Activated CD8-positive, alpha-beta T cell treated with anti-CD3 and anti-CD28 coated beads, Interleukin-2, amount 10 ng/mL, durations not matched to agents 7 days and 5 days (primary cell): ENCODE measurements at regions of chr11 and their contacts with region 1.

Region 1: DNA sequence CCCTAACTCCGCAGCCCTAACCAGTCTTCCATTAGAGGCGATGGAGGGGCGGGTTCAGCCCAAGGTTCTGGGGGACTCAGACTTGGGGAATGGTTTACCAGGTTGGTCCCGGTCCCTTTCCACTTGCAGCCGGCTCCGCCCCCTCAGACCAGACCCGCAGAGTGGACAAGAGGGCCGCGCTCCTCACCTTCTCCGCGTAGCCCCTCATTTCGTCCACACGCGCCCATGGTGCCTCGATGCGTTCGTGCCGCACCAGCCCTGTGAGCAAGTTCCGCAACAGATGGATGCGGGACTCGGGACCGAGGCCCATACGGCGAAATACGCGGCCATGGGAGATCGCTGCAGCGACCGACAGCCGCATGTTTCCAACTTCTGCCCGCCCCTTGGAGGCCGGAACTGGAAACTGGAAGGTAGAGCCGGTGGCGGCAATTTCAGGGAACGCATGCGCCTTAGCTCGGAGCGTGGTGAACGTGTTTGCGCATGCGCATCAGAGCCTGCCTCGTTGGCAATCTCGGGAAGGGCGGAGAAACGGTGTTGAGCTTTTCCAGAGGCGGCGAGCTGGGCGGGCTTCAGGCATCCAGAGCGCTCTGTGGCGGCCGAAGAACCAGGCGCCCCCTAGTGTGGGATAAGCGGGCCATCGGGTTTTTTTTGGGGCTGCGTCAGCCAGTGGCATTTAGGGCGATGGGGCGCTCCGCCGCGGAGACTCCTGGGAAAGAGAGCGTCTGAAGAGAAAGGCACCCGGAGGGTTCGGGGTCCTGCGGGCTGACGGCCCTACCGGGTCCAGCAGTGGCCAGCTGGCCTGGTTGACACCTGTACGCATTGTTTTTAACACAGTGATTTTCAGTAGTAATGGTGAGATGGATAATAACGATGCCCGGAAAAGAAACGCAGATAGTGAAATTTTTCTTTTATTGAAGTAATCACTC is at the start of gene MRPL17:
- DNase-seq: peak; percentile 100
- ATAC-seq: peak; percentile 98
- H3K4me3 Mint-ChIP-seq: peak within 1 kb of the TSS; percentile 99
- H3K27ac Mint-ChIP-seq: peak within 1 kb of the TSS; percentile 97
- H3K4me1 Mint-ChIP-seq: peaks cover 28% of the 10 kb centered on the region
- H3K27me3 Mint-ChIP-seq: no peaks in the 10 kb centered on the region
- total RNA-seq, gene MRPL17: 60.6 to 69.2 TPM

Region 2: GRCh38 chr11:6523253-6523652 is 159.9 kb before region 1 on chr11:
- CTCF ChIA-PET with region 1: interaction called, 17 read pairs
- POLR2A ChIA-PET with region 1: no interaction called
- DNase-seq: no peak
- ATAC-seq: no peak
- H3K4me3 Mint-ChIP-seq: no peak overlapping the region
- H3K27ac Mint-ChIP-seq: no peak overlapping the region
- H3K4me1 Mint-ChIP-seq: peaks cover 39% of the 10 kb centered on the region
- H3K27me3 Mint-ChIP-seq: no peaks in the 10 kb centered on the region

Region 3: DNA sequence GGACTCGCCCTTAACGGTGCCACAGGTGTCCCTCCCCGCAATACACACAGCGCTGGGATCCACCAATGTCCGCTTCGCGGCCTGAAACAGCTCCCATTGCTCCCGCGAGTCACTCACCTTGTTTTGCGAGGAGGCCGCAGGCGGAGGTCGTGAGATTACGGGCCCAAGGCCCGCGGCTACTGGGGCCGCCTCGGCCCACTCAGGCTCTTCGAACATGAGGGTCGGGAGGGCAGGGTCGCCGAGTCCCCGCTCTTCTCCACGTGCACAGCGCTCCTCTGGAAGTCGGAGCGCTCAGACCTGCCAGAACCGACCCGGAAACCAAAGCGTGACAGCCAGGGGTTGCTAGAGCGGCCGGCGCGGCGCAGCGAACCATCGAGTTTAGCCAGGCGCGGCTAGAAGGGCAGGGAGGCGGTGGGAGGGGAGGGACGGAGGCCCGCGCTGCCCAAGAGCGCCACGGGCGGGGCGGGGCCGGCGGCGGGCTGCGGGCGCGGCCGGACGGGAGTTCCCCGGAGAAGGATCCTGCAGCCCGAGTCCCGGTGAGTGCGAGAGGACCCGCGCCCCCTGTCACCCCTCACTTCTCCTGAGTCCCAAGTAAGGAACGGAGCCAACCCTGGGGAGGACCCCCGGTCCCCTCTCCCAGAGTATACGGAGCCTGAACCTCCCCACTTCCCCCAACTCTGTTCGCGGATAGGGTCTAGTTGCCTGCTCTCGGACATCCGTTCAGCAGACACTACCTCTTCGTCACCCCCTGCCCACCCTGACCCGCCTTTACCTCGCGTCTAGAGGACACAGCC is 79.7 kb before region 1 on chr11 and contains the starts of genes ILK and RRP8:
- CTCF ChIA-PET with region 1: interaction called, 67 read pairs
- POLR2A ChIA-PET with region 1: interaction called, 8 read pairs
- DNase-seq: peak; percentile 92
- ATAC-seq: peak; percentile 82
- H3K4me3 Mint-ChIP-seq: no peak within 1 kb of the TSS
- H3K27ac Mint-ChIP-seq: no peak within 1 kb of the TSS
- H3K4me1 Mint-ChIP-seq: peaks cover 35% of the 10 kb centered on the region
- H3K27me3 Mint-ChIP-seq: no peaks in the 10 kb centered on the region
- total RNA-seq, gene ILK: 195 to 197 TPM
- total RNA-seq, gene RRP8: 28.6 to 29.8 TPM

Region 4: GRCh38 chr11:6619004-6619745 is 64.0 kb before region 1 on chr11 and contains the start of gene TPP1:
- CTCF ChIA-PET with region 1: interaction called, 93 read pairs
- POLR2A ChIA-PET with region 1: interaction called, 27 read pairs
- DNase-seq: peak; percentile 95
- ATAC-seq: peak; percentile 96
- H3K4me3 Mint-ChIP-seq: no peak within 1 kb of the TSS
- H3K27ac Mint-ChIP-seq: no peak within 1 kb of the TSS
- H3K4me1 Mint-ChIP-seq: peaks cover 2% of the 10 kb centered on the region
- H3K27me3 Mint-ChIP-seq: no peaks in the 10 kb centered on the region
- total RNA-seq, gene TPP1: 74.1 to 78.9 TPM

Region 5: GRCh38 chr11:6646918-6647679 is 36.1 kb before region 1 on chr11:
- CTCF ChIA-PET with region 1: interaction called, 15 read pairs
- POLR2A ChIA-PET with region 1: no interaction called
- DNase-seq: peak; percentile 42
- ATAC-seq: peak; percentile 75
- H3K4me3 Mint-ChIP-seq: no peak overlapping the region
- H3K27ac Mint-ChIP-seq: no peak overlapping the region
- H3K4me1 Mint-ChIP-seq: no peaks in the 10 kb centered on the region
- H3K27me3 Mint-ChIP-seq: no peaks in the 10 kb centered on the region

Region 6: GRCh38 chr11:6695377-6695776 is 12.2 kb after region 1 on chr11:
- CTCF ChIA-PET with region 1: interaction called, 13 read pairs
- POLR2A ChIA-PET with region 1: no interaction called
- DNase-seq: no peak
- ATAC-seq: peak; percentile 45
- H3K4me3 Mint-ChIP-seq: no peak overlapping the region
- H3K27ac Mint-ChIP-seq: no peak overlapping the region
- H3K4me1 Mint-ChIP-seq: peaks cover 23% of the 10 kb centered on the region
- H3K27me3 Mint-ChIP-seq: no peaks in the 10 kb centered on the region

Region 7: GRCh38 chr11:6757373-6757967 is 74.3 kb after region 1 on chr11:
- CTCF ChIA-PET with region 1: interaction called, 12 read pairs
- POLR2A ChIA-PET with region 1: no interaction called
- DNase-seq: peak; percentile 76
- ATAC-seq: peak; percentile 90
- H3K4me3 Mint-ChIP-seq: no peak overlapping the region
- H3K27ac Mint-ChIP-seq: no peak overlapping the region
- H3K4me1 Mint-ChIP-seq: no peaks in the 10 kb centered on the region
- H3K27me3 Mint-ChIP-seq: peaks cover 2% of the 10 kb centered on the region

Region 8: DNA sequence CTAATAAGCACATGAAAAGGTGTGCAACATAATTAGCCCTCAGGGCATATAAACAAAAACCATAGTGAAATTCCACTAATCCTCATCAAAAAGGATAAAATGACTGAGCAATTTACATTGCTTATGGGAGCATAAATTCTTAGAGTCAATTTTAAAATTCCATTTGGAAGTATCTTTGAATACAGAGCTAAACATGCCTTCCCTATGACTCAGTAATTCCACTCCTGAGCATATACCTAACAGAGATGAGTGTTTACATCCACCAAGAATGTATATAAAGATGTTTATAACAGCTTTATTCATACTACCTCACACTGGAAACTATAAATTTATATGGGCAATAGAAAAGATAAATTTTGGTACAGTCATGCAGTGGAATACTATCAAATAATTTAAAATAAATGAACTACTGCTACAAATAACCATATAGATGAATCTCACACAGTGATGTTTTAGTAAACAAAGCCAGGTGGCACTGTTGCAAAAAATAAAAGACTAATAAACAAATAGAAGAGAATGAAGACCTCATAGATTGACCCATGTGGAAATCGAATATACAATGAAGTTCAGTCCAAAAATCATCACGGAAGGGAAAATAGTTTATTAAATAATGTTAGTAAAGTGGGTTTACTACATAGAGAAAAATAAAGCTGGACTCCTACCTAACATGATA is 217.3 kb after region 1 on chr11:
- CTCF ChIA-PET with region 1: no interaction called
- POLR2A ChIA-PET with region 1: no interaction called
- DNase-seq: no peak
- ATAC-seq: no peak
- H3K4me3 Mint-ChIP-seq: no peak overlapping the region
- H3K27ac Mint-ChIP-seq: no peak overlapping the region
- H3K4me1 Mint-ChIP-seq: peaks cover under 1% of the 10 kb centered on the region
- H3K27me3 Mint-ChIP-seq: peaks cover 14% of the 10 kb centered on the region